Vagina (tissue), 2 donors: ENCODE measurements at regions of chr6 and their contacts with region 1.

Region 1: DNA sequence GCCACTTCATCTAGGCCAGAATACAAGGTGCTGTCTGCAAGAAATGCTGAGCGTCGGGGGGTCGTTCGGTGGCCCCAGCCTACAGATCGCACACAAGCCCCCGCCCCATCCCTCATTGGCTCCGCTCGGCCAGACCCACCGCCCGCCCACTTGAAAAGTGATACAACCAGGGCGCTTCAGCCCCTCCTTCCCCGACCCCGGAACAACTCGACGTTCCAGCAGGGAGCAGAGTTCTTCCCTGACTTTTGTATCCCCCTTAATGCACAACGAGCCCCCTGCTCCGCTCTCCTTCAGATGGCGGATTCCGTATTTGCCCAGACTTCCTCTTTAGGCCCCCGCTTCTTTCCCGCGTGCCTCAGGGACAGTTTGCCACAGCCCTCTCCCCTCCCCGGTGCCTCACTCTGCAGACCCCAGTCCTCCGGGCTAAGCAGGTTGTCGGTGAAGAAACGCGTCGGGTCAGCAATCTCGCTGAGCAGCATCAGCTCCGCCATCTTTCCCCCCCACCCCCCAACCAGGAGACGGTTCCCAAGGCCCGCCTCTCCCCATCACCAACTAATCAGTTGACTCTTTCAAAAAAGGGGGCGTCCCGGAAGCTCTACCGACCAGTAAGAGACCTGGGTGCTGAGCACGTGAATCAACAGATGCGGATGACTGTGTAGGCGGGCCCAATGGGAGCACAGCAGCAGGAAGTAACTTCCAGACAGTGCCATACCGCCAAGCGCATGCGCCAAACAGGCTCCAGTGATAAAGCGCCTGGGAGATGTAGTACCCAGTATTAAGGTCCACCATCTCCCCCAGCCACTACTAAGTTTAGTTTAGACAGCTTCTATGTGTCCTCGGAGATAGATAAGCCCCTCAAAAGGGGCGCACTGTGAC is at the start of gene ATF6B:
- DNase-seq: peak in 1 of 2 donors; percentile 100
- H3K4me3 ChIP-seq: peak within 1 kb of the TSS; percentile 67 to 97
- H3K27ac ChIP-seq: peak within 1 kb of the TSS; percentile 88
- H3K4me1 ChIP-seq: peaks cover 38% of the 10 kb centered on the region
- H3K27me3 ChIP-seq: no peaks in the 10 kb centered on the region
- CTCF ChIP-seq: no peak
- POLR2A ChIP-seq: peak in 1 of 2 donors; percentile 58
- total RNA-seq, gene ATF6B: 76.6 TPM

Region 2: GRCh38 chr6:32140420-32141046 is 12.6 kb after region 1 on chr6:
- intact Hi-C with region 1: no loop called
- DNase-seq: no peak
- H3K4me3 ChIP-seq: no peak overlapping the region
- H3K27ac ChIP-seq: no peak overlapping the region
- H3K4me1 ChIP-seq: no peaks in the 10 kb centered on the region
- H3K27me3 ChIP-seq: no peaks in the 10 kb centered on the region
- CTCF ChIP-seq: no peak
- POLR2A ChIP-seq: no peak

Region 3: DNA sequence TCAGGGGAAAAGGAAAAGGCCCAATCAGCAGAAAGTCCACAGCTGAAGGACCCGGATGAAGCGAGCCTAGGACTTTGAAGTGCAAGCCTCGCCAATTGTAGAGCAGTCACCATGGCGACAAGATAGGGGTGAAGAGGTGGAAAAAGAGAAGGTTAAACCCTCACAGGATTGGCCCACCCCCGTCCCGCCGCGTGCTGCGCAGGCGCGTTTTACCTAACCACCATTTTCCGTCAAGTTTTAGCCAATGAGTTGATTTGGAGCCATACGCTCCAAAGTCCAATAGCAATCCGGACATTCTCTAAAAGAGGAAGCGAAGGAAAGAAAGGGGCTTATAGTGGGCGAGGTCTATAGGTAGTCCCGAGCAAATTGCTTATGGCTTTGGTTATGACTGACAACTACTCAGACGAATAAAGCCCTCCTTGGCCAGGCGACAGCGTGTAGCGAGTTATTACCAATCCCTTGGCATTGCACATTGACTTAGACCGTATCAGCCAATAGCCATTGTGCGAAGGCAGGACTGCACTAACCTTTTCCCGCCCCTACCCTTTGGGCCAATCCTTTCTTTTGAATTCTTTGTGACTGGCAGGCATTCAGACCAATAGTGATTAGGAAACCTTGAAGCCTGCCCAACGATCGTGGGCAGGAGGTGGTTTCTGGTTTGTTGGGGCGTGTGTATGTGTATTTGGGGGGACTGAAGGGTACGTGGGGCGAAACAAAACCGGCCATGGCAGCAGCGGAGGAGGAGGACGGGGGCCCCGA is 50.0 kb after region 1 on chr6 and contains the start of gene RNF5:
- intact Hi-C with region 1: loop called (anchors 10 kb)
- DNase-seq: peak in 1 of 2 donors; percentile 100
- H3K4me3 ChIP-seq: peak within 1 kb of the TSS; percentile 81 to 93
- H3K27ac ChIP-seq: peak within 1 kb of the TSS; percentile 95
- H3K4me1 ChIP-seq: peaks cover 45% of the 10 kb centered on the region
- H3K27me3 ChIP-seq: no peaks in the 10 kb centered on the region
- CTCF ChIP-seq: no peak
- POLR2A ChIP-seq: no peak
- total RNA-seq, gene RNF5: 48.4 TPM

Region 4: DNA sequence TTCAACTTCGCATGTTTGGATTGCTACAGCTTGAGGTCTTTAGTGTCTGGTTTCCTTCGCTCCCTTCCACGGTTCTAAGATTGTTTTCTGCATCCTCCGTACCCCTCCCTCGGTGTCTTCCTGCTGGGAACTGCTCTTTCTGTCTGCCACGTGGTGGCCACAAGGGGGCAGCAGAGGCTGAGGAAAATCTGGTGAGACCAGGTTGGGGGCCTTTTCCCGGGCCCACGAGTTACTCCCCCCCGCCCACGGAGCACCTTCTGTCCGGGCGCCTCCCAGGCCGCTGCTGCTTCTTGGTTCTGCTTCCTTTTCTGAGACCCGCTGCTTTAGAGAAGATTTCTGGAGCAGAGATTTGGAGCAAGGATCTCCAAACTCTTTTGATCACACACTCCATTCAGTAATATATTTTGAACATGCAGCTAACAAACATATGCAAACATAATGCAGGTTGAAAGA is 117.0 kb after region 1 on chr6:
- intact Hi-C with region 1: loop called (anchors 10 kb)
- DNase-seq: no peak
- H3K4me3 ChIP-seq: peak overlapping the region in 1 of 2 donors; percentile 24
- H3K27ac ChIP-seq: peak overlapping the region; percentile 85
- H3K4me1 ChIP-seq: peaks cover 13% of the 10 kb centered on the region
- H3K27me3 ChIP-seq: no peaks in the 10 kb centered on the region
- CTCF ChIP-seq: peak; percentile 87 to 98 (median 96)
- POLR2A ChIP-seq: no peak